ENCODE measurements at regions of chr6 and their contacts with region 1.

Region 1: GRCh38 chr6:52233975-52234823 is 10.1 kb downstream of the IL17F start:
- DNase-seq: peak; percentile 24
- H3K4me3 ChIP-seq: no peak overlapping the region
- H3K27ac ChIP-seq: no peak overlapping the region
- H3K4me1 ChIP-seq: peaks cover 0 to 7% (median 2%) of the 10 kb centered on the region in 4 donors
- H3K27me3 ChIP-seq: no peaks in the 10 kb centered on the region
- CTCF ChIP-seq: peak; percentile 35 to 63 (median 51)
- EP300 ChIP-seq: no peak
- POLR2A ChIP-seq: no peak

Region 2: DNA sequence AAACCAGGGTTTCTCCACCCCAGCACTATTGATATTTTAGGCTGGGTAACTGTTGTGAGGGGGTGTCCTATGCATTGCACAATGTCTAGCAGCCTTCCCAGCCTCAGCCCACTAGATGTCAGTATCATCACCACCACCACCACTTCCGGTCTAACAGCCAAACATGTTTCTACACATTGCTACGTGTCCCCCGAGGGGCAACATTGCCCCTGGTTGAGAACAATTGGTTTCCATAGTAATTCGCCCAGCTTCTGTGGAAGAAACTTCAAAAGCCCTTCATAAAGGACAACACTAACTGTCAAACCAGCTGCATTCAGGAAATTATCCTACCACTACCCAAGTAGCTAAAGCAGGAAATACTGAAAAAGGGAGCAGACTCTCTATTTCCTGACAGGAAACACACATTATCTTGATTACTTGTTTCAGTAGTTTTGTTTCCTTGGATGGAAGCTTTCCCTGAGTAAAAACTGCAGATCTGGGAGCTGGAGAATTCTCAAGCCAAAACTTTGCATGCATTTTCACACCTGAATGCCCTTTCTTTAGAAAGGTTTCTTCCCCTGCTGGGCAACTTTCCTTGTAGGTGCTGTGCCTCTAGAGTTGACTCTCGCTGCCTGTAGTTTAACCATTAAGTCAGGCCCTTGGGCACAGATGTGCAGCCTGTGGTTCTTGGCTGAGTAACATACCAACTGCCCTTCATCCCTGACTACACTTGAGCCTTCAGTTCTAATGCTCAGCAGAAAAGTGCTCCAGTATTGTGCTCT is 170.4 kb before region 1 on chr6:
- in situ Hi-C with region 1: loop called in 1 of 4 experiments (anchors 10 kb)
- intact Hi-C with region 1: no loop called
- DNase-seq: peak; percentile 56
- H3K4me3 ChIP-seq: no peak overlapping the region
- H3K27ac ChIP-seq: no peak overlapping the region
- H3K4me1 ChIP-seq: no peaks in the 10 kb centered on the region
- H3K27me3 ChIP-seq: no peaks in the 10 kb centered on the region
- CTCF ChIP-seq: peak; percentile 16 to 46 (median 42)
- EP300 ChIP-seq: no peak
- POLR2A ChIP-seq: no peak

Region 3: GRCh38 chr6:52371656-52372191 is 137.5 kb after region 1 on chr6:
- in situ Hi-C with region 1: no loop called
- intact Hi-C with region 1: no loop called
- DNase-seq: no peak
- H3K4me3 ChIP-seq: no peak overlapping the region
- H3K27ac ChIP-seq: no peak overlapping the region
- H3K4me1 ChIP-seq: peaks cover 6 to 39% (median 8%) of the 10 kb centered on the region in 4 donors
- H3K27me3 ChIP-seq: no peaks in the 10 kb centered on the region
- CTCF ChIP-seq: no peak
- EP300 ChIP-seq: no peak
- POLR2A ChIP-seq: no peak

Region 4: GRCh38 chr6:52872031-52872430 is 637.8 kb after region 1 on chr6:
- in situ Hi-C with region 1: no loop called
- intact Hi-C with region 1: no loop called
- DNase-seq: no peak
- H3K4me3 ChIP-seq: no peak overlapping the region
- H3K27ac ChIP-seq: no peak overlapping the region
- H3K4me1 ChIP-seq: no peaks in the 10 kb centered on the region
- H3K27me3 ChIP-seq: no peaks in the 10 kb centered on the region
- CTCF ChIP-seq: no peak
- EP300 ChIP-seq: no peak
- POLR2A ChIP-seq: no peak

Measured in transverse colon (tissue), 4 donors.